IMR-90 (cell line): ENCODE measurements at regions of chr6 and their contacts with region 1.

Region 1: GRCh38 chr6:108565893-108566292 is 5.2 kb downstream of the FOXO3 start:
- DNase-seq: peak; percentile 88
- ATAC-seq: 0 out of 2 replicates have a peak, but pooled peaks have one; percentile 2
- H3K4me3 ChIP-seq: no peak overlapping the region
- H3K27ac ChIP-seq: peak overlapping the region; percentile 21; the same call in 1 of the 2 replicates
- H3K4me1 ChIP-seq: peaks cover 14% of the 10 kb centered on the region
- H3K27me3 ChIP-seq: no peaks in the 10 kb centered on the region
- CTCF ChIP-seq: peak; percentile 33; the same call in 1 of the 2 replicates
- POLR2A ChIP-seq: no peak
- RAD21 ChIP-seq: peak; percentile 39

Region 2: GRCh38 chr6:108526739-108527174 is 39.1 kb before region 1 on chr6:
- CTCF ChIA-PET with region 1: no interaction called
- POLR2A ChIA-PET with region 1: no interaction called
- dilution Hi-C with region 1: no loop called
- in situ Hi-C with region 1: no loop called
- intact Hi-C with region 1: no loop called
- DNase-seq: peak; percentile 62
- ATAC-seq: peak; percentile 63
- H3K4me3 ChIP-seq: no peak overlapping the region
- H3K27ac ChIP-seq: no peak overlapping the region
- H3K4me1 ChIP-seq: peaks cover 2% of the 10 kb centered on the region; the same call in 1 of the 2 replicates
- H3K27me3 ChIP-seq: peaks cover 11% of the 10 kb centered on the region
- CTCF ChIP-seq: peak; percentile 88
- POLR2A ChIP-seq: peak; percentile 33; the same call in 1 of the 2 replicates
- RAD21 ChIP-seq: peak; percentile 91

Region 3: DNA sequence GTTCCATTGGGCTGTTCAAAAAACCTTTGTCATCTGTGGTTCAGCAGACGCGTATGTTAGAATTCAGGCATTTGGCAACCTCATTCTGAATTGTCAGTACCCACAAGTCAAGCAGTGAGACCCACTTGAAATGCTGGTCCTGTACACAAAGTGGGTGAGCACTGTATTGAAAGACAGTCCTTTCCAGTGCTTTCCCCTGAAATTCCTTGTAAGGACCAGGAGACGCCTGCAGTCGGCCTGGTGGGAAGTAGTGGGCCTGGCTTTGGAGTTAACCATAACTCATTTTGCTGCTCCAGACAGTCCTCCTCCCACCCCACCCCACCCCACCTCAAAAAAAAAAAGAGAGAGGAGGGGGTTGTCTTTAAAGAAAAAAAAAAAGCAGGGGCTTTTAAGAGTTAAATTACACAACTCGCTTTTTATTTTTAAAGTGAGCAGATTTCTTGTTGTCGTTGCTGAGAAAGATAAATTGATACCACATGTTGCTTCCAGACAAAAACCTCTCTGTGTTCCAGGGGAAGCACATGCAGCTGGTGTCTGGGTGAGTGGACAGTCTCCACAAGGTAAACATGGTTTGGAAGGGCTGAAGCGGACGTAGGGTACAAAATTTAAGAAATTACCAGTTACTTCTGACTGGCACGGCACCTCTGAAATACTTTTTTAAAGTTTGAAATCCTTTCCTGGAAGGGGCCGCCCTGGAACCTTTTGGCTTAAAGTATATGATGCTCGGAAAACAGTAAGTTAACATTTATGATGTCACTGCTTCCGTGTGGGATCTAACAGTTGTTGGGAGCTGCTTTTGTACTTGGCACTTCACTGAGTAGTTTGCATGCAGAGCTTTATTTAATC is 90.1 kb after region 1 on chr6:
- CTCF ChIA-PET with region 1: no interaction called
- POLR2A ChIA-PET with region 1: interaction called, 13 read pairs
- dilution Hi-C with region 1: no loop called
- in situ Hi-C with region 1: no loop called
- intact Hi-C with region 1: loop called (anchors 2 kb)
- DNase-seq: peak; percentile 90
- ATAC-seq: peak; percentile 21
- H3K4me3 ChIP-seq: no peak overlapping the region
- H3K27ac ChIP-seq: peak overlapping the region; percentile 51; the same call in 1 of the 2 replicates
- H3K4me1 ChIP-seq: peaks cover 33% of the 10 kb centered on the region
- H3K27me3 ChIP-seq: no peaks in the 10 kb centered on the region
- CTCF ChIP-seq: no peak
- POLR2A ChIP-seq: no peak
- RAD21 ChIP-seq: no peak

Region 4: DNA sequence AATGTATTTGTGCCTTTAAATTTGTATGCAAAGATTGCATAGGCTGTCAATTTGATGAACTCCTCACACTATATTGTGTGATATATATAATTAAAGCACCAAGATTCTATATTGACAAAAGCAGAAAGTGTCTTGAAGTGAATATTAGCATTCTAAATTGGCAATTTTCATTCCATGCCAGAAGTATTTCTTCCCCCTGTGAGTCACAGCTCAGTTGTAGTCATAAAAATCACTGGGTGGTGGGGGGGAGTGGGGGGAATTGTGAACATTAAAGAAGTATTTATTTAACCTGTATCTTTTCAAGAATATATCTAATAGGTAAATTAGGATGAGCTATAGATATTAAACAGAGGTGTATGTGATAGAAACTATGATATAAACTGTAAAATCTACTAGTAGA is 279.3 kb after region 1 on chr6:
- CTCF ChIA-PET with region 1: no interaction called
- POLR2A ChIA-PET with region 1: interaction called, 12 read pairs
- dilution Hi-C with region 1: no loop called
- in situ Hi-C with region 1: no loop called
- intact Hi-C with region 1: no loop called
- DNase-seq: no peak
- ATAC-seq: no peak
- H3K4me3 ChIP-seq: no peak overlapping the region
- H3K27ac ChIP-seq: no peak overlapping the region
- H3K4me1 ChIP-seq: no peaks in the 10 kb centered on the region; the same call in 1 of the 2 replicates
- H3K27me3 ChIP-seq: no peaks in the 10 kb centered on the region; the same call in 1 of the 2 replicates
- CTCF ChIP-seq: no peak
- POLR2A ChIP-seq: no peak
- RAD21 ChIP-seq: no peak